CD8-positive, alpha-beta T cell (primary cell): ENCODE measurements at regions of chr3 and their contacts with region 1.

Region 1: DNA sequence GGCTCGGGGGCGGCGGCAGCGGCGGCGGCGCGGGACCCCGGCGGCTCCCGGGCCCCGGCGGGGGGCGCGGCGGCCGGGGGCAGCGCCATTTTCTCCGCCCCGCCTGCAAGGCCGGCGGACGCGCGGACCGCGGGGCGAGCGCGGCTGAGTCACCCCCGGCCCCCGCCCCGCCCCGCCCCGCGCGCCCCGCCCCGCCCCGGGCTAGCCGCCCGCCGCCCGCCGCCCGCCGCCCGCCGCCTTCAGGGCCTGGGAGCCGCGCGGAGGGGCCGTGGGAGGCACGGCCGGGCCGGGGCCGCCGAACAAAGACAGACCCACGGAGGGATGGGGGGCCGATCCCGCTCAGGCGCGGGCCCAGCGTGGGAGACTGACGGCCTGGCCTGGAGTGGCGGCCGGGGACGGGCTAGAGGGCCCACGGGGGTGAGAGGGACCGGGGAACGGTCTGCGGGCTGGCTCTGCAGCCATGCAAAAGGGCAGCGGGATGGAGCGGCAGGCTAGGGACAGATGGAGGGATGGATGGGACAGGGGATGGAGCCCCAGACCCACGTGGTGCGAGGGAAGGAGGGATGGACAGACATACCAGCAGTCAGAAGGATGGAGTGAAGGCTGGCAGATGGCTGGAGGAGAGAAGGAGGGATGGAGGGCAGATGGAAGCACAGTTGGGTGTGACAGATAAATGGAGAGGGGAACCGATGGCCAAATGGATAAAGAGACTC is at the start of gene EIF4E3:
- DNase-seq: peak in 8 of 9 experiments; percentile 26 to 79 (median 42)
- ATAC-seq: peak; percentile 28
- H3K4me3 ChIP-seq: peak within 1 kb of the TSS; percentile 74 to 89
- H3K4me3 Mint-ChIP-seq: peak within 1 kb of the TSS; percentile 92
- H3K27ac ChIP-seq: peak within 1 kb of the TSS; percentile 54 to 80
- H3K27ac Mint-ChIP-seq: peak within 1 kb of the TSS; percentile 97
- H3K4me1 ChIP-seq: peaks cover 59% of the 10 kb centered on the region
- H3K4me1 Mint-ChIP-seq: peaks cover 73% of the 10 kb centered on the region
- H3K27me3 ChIP-seq: no peaks in the 10 kb centered on the region
- H3K27me3 Mint-ChIP-seq: no peaks in the 10 kb centered on the region
- CTCF ChIP-seq: no peak
- total RNA-seq, gene EIF4E3: 33.0 to 34.5 TPM

Region 2: GRCh38 chr3:71064288-71064955 is 661.0 kb before region 1 on chr3:
- CTCF ChIA-PET with region 1: no interaction called
- POLR2A ChIA-PET with region 1: no interaction called
- intact Hi-C with region 1: loop called (anchors 1 to 10 kb)
- DNase-seq: peak; percentile 48 to 86 (median 66)
- ATAC-seq: peak; percentile 43
- H3K4me3 ChIP-seq: peak overlapping the region; percentile 65 to 91
- H3K4me3 Mint-ChIP-seq: no peak overlapping the region
- H3K27ac ChIP-seq: peak overlapping the region; percentile 80 to 85
- H3K27ac Mint-ChIP-seq: no peak overlapping the region
- H3K4me1 ChIP-seq: peaks cover 79% of the 10 kb centered on the region
- H3K4me1 Mint-ChIP-seq: peaks cover 67% of the 10 kb centered on the region
- H3K27me3 ChIP-seq: no peaks in the 10 kb centered on the region
- H3K27me3 Mint-ChIP-seq: no peaks in the 10 kb centered on the region
- CTCF ChIP-seq: no peak

Region 3: DNA sequence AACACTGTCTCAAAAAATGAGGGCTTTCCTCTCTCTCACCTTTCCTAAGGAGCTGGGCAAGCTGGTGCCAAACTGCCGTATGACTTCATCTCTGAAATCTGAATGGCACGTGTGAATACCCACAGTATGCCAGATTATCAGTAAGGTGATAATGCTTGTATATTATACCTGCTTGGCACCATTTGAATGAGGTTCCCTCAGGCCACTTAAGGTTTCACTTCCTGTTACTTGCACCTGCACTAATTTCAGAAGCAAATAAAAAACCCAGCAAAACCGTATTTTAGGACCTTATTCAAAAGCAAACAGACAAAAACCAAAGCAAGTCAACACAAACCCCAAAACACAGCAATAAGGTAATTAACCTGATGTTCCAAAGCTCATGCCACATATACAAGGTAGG is 161.6 kb before region 1 on chr3:
- CTCF ChIA-PET with region 1: no interaction called
- POLR2A ChIA-PET with region 1: no interaction called
- intact Hi-C with region 1: no loop called
- DNase-seq: no peak
- ATAC-seq: no peak
- H3K4me3 ChIP-seq: no peak overlapping the region
- H3K4me3 Mint-ChIP-seq: no peak overlapping the region
- H3K27ac ChIP-seq: no peak overlapping the region
- H3K27ac Mint-ChIP-seq: no peak overlapping the region
- H3K4me1 ChIP-seq: no peaks in the 10 kb centered on the region
- H3K4me1 Mint-ChIP-seq: peaks cover 3% of the 10 kb centered on the region
- H3K27me3 ChIP-seq: no peaks in the 10 kb centered on the region
- H3K27me3 Mint-ChIP-seq: no peaks in the 10 kb centered on the region
- CTCF ChIP-seq: no peak

Region 4: DNA sequence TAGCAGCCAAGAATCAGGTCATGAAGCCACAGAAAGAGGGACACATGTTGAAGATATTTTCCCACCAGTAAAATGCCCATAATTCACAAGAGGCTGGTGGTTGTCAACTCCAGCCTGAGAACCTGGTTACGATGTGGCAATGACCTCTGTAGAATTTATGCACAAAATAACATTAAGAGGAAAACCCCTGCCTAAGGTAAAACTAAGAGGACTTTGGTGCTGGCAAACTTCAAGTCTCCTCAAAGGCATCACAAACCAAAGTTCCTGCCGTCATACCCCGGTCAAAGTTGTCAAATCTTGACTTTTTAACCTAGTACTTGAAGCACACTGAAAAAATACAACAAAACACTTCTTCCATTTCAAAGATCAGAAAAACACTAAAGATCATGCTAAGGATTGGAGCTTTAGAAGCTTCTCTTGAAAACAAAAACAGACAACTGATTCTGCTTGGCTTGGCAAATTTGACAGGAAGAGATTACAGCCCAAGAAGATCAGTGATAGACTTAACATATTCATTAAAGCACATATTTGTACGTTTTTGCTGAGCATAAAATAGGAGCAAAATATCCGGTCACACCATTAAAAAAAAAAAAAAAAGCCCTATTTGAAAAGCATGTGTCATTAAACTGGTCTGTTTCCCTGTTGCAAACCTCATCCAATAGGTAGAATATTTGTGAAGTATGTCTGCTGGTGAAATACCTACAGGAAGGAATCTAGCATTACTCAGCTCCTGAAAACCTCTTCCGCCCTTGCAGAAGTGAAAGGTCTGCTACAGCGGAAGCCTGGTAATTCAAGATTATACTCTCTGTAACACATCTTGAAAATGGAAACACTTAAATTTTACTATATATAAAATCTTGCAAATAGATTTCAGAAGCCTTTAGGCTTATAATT is 23.1 kb before region 1 on chr3:
- CTCF ChIA-PET with region 1: interaction called, 10 read pairs
- POLR2A ChIA-PET with region 1: interaction called, 3 read pairs
- intact Hi-C with region 1: no loop called
- DNase-seq: peak in 7 of 9 experiments; percentile 22 to 68 (median 40)
- ATAC-seq: peak; percentile 86
- H3K4me3 ChIP-seq: peak overlapping the region in 1 of 2 experiments; percentile 10
- H3K4me3 Mint-ChIP-seq: peak overlapping the region; percentile 36
- H3K27ac ChIP-seq: peak overlapping the region; percentile 22 to 68
- H3K27ac Mint-ChIP-seq: peak overlapping the region; percentile 90
- H3K4me1 ChIP-seq: peaks cover 36% of the 10 kb centered on the region
- H3K4me1 Mint-ChIP-seq: peaks cover 67% of the 10 kb centered on the region
- H3K27me3 ChIP-seq: no peaks in the 10 kb centered on the region
- H3K27me3 Mint-ChIP-seq: no peaks in the 10 kb centered on the region
- CTCF ChIP-seq: no peak

Region 5: GRCh38 chr3:71859123-71859519 is 133.7 kb after region 1 on chr3:
- CTCF ChIA-PET with region 1: interaction called, 25 read pairs
- POLR2A ChIA-PET with region 1: no interaction called
- intact Hi-C with region 1: loop called (anchors 1 to 5 kb)
- DNase-seq: peak in 2 of 9 experiments; percentile 65 to 75
- ATAC-seq: peak; percentile 75
- H3K4me3 ChIP-seq: no peak overlapping the region
- H3K4me3 Mint-ChIP-seq: no peak overlapping the region
- H3K27ac ChIP-seq: no peak overlapping the region
- H3K27ac Mint-ChIP-seq: no peak overlapping the region
- H3K4me1 ChIP-seq: no peaks in the 10 kb centered on the region
- H3K4me1 Mint-ChIP-seq: peaks cover 5% of the 10 kb centered on the region
- H3K27me3 ChIP-seq: peaks cover 0 to 4% of the 10 kb centered on the region in 2 experiments
- H3K27me3 Mint-ChIP-seq: peaks cover 24% of the 10 kb centered on the region
- CTCF ChIP-seq: peak; percentile 47

Region 6: DNA sequence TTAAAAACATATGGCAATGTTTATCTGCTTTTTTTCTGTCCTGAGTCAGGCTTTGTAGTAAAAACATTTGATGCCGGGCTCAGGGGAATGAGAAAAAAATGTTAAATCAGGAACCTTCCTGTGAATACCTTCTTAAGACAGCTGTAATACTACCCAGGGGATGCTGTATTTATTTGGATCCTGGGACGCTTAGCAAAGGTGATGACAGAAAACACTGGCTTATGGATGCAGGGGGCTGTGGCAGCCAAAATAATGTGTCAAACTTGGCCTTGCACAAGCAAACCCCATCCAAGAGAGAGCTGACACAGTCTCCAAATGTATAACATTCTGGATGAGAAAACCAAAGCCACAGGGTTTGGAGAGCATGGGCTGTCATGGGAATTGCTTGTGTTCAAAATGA is 497.7 kb after region 1 on chr3:
- CTCF ChIA-PET with region 1: no interaction called
- POLR2A ChIA-PET with region 1: no interaction called
- intact Hi-C with region 1: no loop called
- DNase-seq: no peak
- ATAC-seq: no peak
- H3K4me3 ChIP-seq: no peak overlapping the region
- H3K4me3 Mint-ChIP-seq: no peak overlapping the region
- H3K27ac ChIP-seq: no peak overlapping the region
- H3K27ac Mint-ChIP-seq: no peak overlapping the region
- H3K4me1 ChIP-seq: no peaks in the 10 kb centered on the region
- H3K4me1 Mint-ChIP-seq: no peaks in the 10 kb centered on the region
- H3K27me3 ChIP-seq: no peaks in the 10 kb centered on the region
- H3K27me3 Mint-ChIP-seq: no peaks in the 10 kb centered on the region
- CTCF ChIP-seq: no peak

Region 7: DNA sequence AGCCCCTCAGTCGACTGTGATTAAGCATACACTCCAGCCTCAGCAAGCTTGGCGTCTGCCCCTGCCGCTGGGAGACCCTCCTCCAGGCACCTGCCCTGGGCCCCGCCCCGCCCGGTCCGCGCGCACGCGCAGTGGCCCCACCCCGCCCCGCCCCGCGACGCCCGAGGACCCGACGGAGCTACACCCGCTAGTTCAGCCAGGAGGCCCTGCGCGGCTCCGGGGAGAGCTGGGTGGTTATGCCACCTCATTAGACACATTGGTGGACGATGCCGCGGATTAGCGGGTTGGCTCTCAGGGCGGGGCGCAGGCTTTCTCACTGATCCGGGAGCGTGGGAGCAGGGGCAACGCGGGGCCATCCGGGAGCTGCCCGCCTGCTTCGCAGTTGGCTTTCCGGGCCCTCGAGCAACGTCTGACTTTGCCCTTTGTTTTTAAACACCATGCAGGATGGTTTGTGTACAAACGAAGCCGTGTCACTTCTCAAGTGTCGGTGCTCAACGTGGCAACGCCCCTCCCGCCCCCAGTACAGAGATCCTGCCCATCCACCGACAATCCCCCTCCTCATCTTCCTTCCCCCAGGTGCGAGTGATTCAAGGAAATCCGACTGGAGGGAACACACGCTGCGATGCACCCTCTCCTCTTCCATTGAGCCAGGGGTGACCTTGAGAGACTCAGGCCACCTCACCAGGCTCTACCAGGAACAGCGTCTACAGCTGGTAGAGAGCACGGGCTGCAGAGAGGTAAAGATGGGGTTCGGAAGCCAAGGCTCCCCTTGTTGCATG is 1013.5 kb after region 1 on chr3:
- CTCF ChIA-PET with region 1: no interaction called
- POLR2A ChIA-PET with region 1: no interaction called
- intact Hi-C with region 1: loop called in 1 of 2 experiments (anchors 5 kb)
- DNase-seq: peak; percentile 50 to 85 (median 73)
- ATAC-seq: peak; percentile 92
- H3K4me3 ChIP-seq: peak overlapping the region; percentile 56 to 67
- H3K4me3 Mint-ChIP-seq: peak overlapping the region; percentile 89
- H3K27ac ChIP-seq: peak overlapping the region; percentile 69 to 73
- H3K27ac Mint-ChIP-seq: peak overlapping the region; percentile 97
- H3K4me1 ChIP-seq: peaks cover 19% of the 10 kb centered on the region
- H3K4me1 Mint-ChIP-seq: peaks cover 31% of the 10 kb centered on the region
- H3K27me3 ChIP-seq: no peaks in the 10 kb centered on the region
- H3K27me3 Mint-ChIP-seq: no peaks in the 10 kb centered on the region
- CTCF ChIP-seq: no peak

Region 8: GRCh38 chr3:72847751-72848702 is 1122.6 kb after region 1 on chr3 and contains the start of gene SHQ1:
- CTCF ChIA-PET with region 1: no interaction called
- POLR2A ChIA-PET with region 1: no interaction called
- intact Hi-C with region 1: loop called (anchors 2 to 5 kb)
- DNase-seq: peak; percentile 84 to 98 (median 95)
- ATAC-seq: peak; percentile 90
- H3K4me3 ChIP-seq: peak within 1 kb of the TSS; percentile 64 to 92
- H3K4me3 Mint-ChIP-seq: peak within 1 kb of the TSS; percentile 95
- H3K27ac ChIP-seq: peak within 1 kb of the TSS; percentile 16 to 51
- H3K27ac Mint-ChIP-seq: peak within 1 kb of the TSS; percentile 80
- H3K4me1 ChIP-seq: peaks cover 23% of the 10 kb centered on the region
- H3K4me1 Mint-ChIP-seq: peaks cover 53% of the 10 kb centered on the region
- H3K27me3 ChIP-seq: no peaks in the 10 kb centered on the region
- H3K27me3 Mint-ChIP-seq: no peaks in the 10 kb centered on the region
- CTCF ChIP-seq: no peak
- total RNA-seq, gene SHQ1: 7.1 to 11.3 TPM